ENCODE measurements at regions of chr3 and their contacts with region 1.

Region 1: DNA sequence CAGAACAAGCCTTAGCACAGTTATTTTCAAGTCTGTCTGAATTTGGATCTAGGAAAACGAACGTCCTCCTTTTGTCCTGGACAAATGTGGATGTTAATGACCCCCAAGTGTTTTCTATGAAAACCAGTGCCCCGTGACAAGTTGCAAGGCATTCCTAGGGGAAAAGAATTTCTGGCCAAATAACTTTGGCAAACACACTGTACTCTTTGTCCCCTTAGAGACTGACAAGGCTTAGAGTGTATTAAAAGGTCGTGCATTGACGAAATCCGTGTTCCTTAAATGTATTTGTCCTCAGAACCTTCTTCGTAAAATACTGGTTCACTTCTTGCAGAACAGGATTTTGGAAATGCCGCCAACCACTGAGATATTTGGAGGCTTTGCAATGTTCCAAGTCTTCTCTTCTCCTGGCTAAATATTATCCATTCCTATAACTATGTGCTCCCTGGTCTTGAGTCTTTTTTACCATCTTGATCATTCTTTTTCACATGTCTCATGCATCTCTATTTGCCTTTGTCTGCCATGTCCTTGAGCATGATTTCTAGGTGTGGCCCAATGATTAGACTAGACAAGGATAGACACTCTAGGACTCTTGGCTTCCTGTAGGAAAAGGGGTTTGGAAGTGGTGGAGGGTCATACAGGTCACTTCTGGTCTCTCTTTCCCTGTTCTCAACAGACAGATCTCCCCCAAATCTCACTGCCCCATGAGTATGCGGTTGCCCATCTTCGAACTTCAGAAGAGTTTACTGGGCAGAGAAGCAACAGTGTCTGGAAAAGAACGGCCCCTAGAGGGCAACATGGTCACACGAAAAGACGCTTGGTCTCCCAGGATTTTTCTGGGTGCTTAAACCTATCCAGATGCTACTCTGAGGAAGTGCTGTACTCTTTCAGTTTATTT is 117.5 kb downstream of the EDEM1 start:
- DNase-seq: peak; percentile 55
- H3K4me3 ChIP-seq: no peak overlapping the region
- H3K27ac ChIP-seq: no peak overlapping the region
- H3K4me1 ChIP-seq: no peaks in the 10 kb centered on the region
- H3K27me3 ChIP-seq: no peaks in the 10 kb centered on the region
- CTCF ChIP-seq: peak; percentile 60

Region 2: DNA sequence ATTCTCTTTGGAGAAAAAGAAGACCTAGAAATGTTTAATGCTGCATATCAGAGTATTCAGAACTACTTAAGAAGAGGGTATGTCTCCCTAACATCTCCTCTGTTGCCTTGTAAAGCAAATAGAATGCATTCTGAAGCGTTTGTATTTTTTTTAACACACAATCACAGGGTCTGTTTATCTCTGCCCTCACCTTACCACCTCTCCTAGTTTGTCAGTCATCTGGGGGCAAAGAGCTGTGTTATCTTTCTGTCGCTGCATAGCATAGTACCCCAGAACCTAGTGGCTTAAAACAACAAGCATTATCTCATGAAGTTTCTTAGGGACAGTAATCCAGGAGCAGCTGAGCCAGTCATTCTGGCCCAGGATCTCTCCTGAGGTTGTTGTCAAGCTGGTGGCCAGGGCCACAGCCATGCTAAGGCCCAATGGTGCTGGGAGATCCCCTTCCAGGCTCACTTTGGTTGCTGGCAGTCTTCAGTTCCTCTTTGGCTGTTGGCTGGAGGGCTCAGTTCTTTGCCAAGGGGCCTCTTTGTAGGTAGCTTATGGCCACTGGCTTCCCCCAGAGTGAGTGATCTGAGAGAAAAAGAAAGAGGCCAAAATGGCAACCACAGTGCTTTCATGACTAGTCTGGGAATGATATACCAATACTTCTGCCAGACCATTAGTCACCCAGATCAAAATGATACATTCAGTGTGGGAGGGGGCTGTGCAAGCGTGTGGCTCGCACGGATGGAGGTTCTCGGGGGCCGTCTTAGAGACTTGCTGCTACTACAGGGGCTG is 99.7 kb before region 1 on chr3:
- intact Hi-C with region 1: no loop called
- DNase-seq: no peak
- H3K4me3 ChIP-seq: no peak overlapping the region
- H3K27ac ChIP-seq: no peak overlapping the region
- H3K4me1 ChIP-seq: no peaks in the 10 kb centered on the region
- H3K27me3 ChIP-seq: no peaks in the 10 kb centered on the region
- CTCF ChIP-seq: no peak

Region 3: DNA sequence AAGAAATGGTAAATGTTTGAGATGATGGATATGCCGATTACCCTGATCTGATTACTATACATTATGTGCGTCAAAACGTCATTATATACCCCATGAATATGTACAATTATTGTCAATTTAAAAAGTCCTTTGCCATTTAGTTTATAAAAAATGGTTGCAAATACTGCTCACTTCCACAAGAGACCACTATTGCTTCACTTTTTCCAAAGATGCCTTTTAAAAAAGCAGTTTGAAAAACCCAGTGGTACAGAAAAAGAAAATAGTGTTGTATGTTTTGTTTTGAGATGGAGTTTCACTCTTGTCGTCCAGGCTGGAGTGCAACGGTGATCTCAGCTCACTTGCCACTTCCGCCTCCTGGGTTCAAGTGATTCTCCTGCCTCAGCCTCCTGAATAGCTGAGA is 78.3 kb before region 1 on chr3:
- intact Hi-C with region 1: loop called (anchors 10 kb)
- DNase-seq: no peak
- H3K4me3 ChIP-seq: no peak overlapping the region
- H3K27ac ChIP-seq: no peak overlapping the region
- H3K4me1 ChIP-seq: no peaks in the 10 kb centered on the region
- H3K27me3 ChIP-seq: no peaks in the 10 kb centered on the region
- CTCF ChIP-seq: peak; percentile 18

Region 4: GRCh38 chr3:5568458-5568857 is 263.4 kb after region 1 on chr3:
- intact Hi-C with region 1: loop called (anchors 10 kb)
- DNase-seq: peak; percentile 52
- H3K4me3 ChIP-seq: no peak overlapping the region
- H3K27ac ChIP-seq: no peak overlapping the region
- H3K4me1 ChIP-seq: no peaks in the 10 kb centered on the region
- H3K27me3 ChIP-seq: no peaks in the 10 kb centered on the region
- CTCF ChIP-seq: peak; percentile 36